Activated T-helper 2 cell treated with anti-CD3 and anti-CD28 coated beads, Interferon-gamma antibody, Interleukin-2, Interleukin-4, amounts not matched to agents 10 μg/mL and 5 μg/mL and 100 μg/mL, durations not matched to agents 14 hours and 24 hours and 36 hours (primary cell): ENCODE measurements at regions of chr4 and their contacts with region 1.

Region 1: DNA sequence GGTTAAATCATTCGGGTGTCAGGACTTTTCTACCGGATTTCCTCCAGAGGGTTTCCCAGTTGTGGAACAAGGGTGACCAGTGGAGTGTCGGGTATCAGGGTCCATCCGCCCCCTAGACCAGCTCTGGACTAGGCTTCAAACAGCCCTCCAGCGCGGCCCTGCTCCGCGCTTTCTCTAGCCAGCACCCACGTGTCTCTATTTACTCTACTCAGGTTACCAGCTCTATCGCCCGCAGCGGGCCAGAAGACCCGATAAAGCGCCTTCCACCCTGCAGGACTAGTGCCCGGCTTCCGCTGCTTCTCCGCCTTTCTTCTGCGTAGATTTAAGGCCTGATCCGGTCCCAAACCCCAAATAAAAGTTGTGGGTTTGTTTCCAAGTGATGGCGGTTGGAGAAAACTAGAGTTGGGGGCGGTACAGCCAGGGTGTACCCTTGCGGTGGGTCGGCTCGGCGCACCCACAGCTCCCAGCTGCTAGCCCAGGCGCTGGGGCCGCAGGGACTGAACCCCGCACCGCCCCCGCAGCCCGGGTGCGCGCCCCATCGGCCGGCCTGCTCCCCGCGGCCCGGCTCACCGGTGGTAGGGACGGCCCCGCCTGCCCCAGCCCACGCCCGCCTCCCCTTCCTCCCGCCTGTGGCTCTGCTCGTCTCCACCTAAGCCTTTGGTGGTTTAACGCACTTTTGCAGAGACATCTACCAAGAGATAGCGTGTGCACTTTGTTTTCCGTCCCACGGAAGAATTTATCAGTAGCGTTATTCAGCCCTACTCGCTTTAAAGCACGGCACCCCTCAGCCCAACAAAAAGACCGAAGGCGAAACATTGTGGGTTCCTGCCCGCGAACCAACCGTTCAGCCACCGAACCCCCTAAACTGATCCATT is 2.1 kb downstream of the LEF1 start:
- DNase-seq: peak; percentile 66
- H3K4me3 Mint-ChIP-seq: peak overlapping the region; percentile 97
- H3K27ac Mint-ChIP-seq: peak overlapping the region; percentile 94
- H3K4me1 Mint-ChIP-seq: peaks cover 55% of the 10 kb centered on the region
- H3K27me3 Mint-ChIP-seq: peaks cover 22% of the 10 kb centered on the region

Region 2: GRCh38 chr4:107520368-107520767 is 646.3 kb before region 1 on chr4:
- intact Hi-C with region 1: no loop called
- DNase-seq: no peak
- H3K4me3 Mint-ChIP-seq: no peak overlapping the region
- H3K27ac Mint-ChIP-seq: no peak overlapping the region
- H3K4me1 Mint-ChIP-seq: no peaks in the 10 kb centered on the region
- H3K27me3 Mint-ChIP-seq: no peaks in the 10 kb centered on the region

Region 3: DNA sequence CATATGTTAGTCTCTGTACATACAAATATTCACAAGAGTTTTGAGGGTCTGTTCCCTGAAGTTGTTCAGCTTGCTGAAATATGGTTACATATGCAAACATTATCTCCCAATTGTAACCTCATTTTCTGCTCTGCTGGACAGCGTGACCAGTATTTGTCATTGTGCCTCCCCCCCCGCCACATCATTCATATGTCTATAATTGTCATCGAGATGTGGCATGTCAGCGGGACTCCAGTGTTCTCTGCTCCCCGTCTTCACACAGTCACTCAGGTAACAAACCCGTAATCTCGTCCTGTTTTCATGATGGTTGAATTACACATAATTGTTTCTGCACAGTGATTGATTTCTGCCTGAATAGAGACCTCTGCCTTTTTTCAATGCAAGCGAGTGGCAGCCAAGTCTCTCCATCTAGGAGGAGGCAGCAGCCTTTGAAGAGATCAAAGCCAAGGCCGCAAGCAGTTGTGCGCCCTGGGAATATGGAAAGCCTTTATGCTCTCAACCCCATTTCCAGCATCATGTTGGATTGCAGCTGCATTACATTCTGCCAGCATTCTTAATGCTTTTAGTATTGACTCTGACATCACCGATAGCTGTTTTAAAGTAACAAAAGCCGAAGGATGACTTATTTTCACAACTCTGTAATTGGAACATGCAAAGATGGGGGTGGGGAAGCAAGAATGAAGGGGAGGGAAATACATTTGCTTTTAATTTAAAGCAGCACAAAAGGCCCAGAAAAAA is 25.3 kb before region 1 on chr4:
- intact Hi-C with region 1: loop called (anchors 2 kb)
- DNase-seq: no peak
- H3K4me3 Mint-ChIP-seq: peak overlapping the region; percentile 72
- H3K27ac Mint-ChIP-seq: peak overlapping the region; percentile 65
- H3K4me1 Mint-ChIP-seq: peaks cover 81% of the 10 kb centered on the region
- H3K27me3 Mint-ChIP-seq: no peaks in the 10 kb centered on the region

Region 4: GRCh38 chr4:108483079-108483478 is 316.4 kb after region 1 on chr4:
- intact Hi-C with region 1: loop called (anchors 2 kb)
- DNase-seq: peak; percentile 35
- H3K4me3 Mint-ChIP-seq: peak overlapping the region; percentile 60
- H3K27ac Mint-ChIP-seq: peak overlapping the region; percentile 69
- H3K4me1 Mint-ChIP-seq: peaks cover 36% of the 10 kb centered on the region
- H3K27me3 Mint-ChIP-seq: peaks cover 4% of the 10 kb centered on the region